Caco-2 (cell line): ENCODE measurements at regions of chr10 and their contacts with region 1.

Region 1: GRCh38 chr10:113073549-113074189 is 123.6 kb downstream of the TCF7L2 start:
- DNase-seq: peak; percentile 91 to 96
- H3K4me3 ChIP-seq: peak overlapping the region; percentile 16
- H3K4me3 Mint-ChIP-seq: peak overlapping the region; percentile 65
- H3K27ac Mint-ChIP-seq: peak overlapping the region; percentile 97
- H3K4me1 ChIP-seq: peaks cover 27% of the 10 kb centered on the region
- H3K4me1 Mint-ChIP-seq: peaks cover 13% of the 10 kb centered on the region
- H3K27me3 ChIP-seq: no peaks in the 10 kb centered on the region
- H3K27me3 Mint-ChIP-seq: no peaks in the 10 kb centered on the region
- CTCF ChIP-seq: no peak

Region 2: DNA sequence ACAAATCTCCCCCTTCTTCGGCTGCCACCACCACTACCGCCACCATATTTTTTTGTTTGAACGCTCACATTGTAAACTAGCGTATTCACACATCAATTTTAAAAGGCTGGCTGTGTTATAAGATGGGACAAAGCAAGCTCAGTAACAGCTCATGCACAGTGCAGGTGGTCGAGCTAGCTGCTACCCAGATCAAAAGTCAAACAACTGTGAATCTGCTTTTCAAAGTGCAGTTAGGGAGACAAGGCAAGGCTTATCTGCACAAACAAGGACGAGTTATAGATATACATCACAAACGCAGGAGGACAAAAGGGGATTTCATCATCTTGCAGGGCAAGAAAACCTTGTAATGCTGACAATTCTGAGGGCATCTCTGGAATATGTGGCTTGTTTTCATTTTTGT is 395.1 kb before region 1 on chr10:
- CTCF ChIA-PET with region 1: no interaction called
- POLR2A ChIA-PET with region 1: no interaction called
- intact Hi-C with region 1: no loop called
- DNase-seq: peak in 1 of 2 experiments; percentile 36
- H3K4me3 ChIP-seq: no peak overlapping the region
- H3K4me3 Mint-ChIP-seq: no peak overlapping the region
- H3K27ac Mint-ChIP-seq: no peak overlapping the region
- H3K4me1 ChIP-seq: peaks cover 23% of the 10 kb centered on the region
- H3K4me1 Mint-ChIP-seq: peaks cover 12% of the 10 kb centered on the region
- H3K27me3 ChIP-seq: no peaks in the 10 kb centered on the region
- H3K27me3 Mint-ChIP-seq: no peaks in the 10 kb centered on the region
- CTCF ChIP-seq: no peak

Region 3: GRCh38 chr10:113059001-113059780 is 14.5 kb before region 1 on chr10:
- CTCF ChIA-PET with region 1: interaction called, 4 read pairs
- POLR2A ChIA-PET with region 1: interaction called, 13 read pairs
- intact Hi-C with region 1: no loop called
- DNase-seq: no peak
- H3K4me3 ChIP-seq: no peak overlapping the region
- H3K4me3 Mint-ChIP-seq: no peak overlapping the region
- H3K27ac Mint-ChIP-seq: no peak overlapping the region
- H3K4me1 ChIP-seq: peaks cover 38% of the 10 kb centered on the region
- H3K4me1 Mint-ChIP-seq: peaks cover 25% of the 10 kb centered on the region
- H3K27me3 ChIP-seq: no peaks in the 10 kb centered on the region
- H3K27me3 Mint-ChIP-seq: no peaks in the 10 kb centered on the region
- CTCF ChIP-seq: no peak

Region 4: GRCh38 chr10:113087165-113088029 is 13.7 kb after region 1 on chr10:
- CTCF ChIA-PET with region 1: interaction called, 5 read pairs
- POLR2A ChIA-PET with region 1: interaction called, 4 read pairs
- intact Hi-C with region 1: loop called (anchors 1 kb)
- DNase-seq: peak; percentile 81 to 87
- H3K4me3 ChIP-seq: no peak overlapping the region
- H3K4me3 Mint-ChIP-seq: peak overlapping the region; percentile 28
- H3K27ac Mint-ChIP-seq: peak overlapping the region; percentile 81
- H3K4me1 ChIP-seq: peaks cover 31% of the 10 kb centered on the region
- H3K4me1 Mint-ChIP-seq: peaks cover 33% of the 10 kb centered on the region
- H3K27me3 ChIP-seq: no peaks in the 10 kb centered on the region
- H3K27me3 Mint-ChIP-seq: no peaks in the 10 kb centered on the region
- CTCF ChIP-seq: no peak

Region 5: DNA sequence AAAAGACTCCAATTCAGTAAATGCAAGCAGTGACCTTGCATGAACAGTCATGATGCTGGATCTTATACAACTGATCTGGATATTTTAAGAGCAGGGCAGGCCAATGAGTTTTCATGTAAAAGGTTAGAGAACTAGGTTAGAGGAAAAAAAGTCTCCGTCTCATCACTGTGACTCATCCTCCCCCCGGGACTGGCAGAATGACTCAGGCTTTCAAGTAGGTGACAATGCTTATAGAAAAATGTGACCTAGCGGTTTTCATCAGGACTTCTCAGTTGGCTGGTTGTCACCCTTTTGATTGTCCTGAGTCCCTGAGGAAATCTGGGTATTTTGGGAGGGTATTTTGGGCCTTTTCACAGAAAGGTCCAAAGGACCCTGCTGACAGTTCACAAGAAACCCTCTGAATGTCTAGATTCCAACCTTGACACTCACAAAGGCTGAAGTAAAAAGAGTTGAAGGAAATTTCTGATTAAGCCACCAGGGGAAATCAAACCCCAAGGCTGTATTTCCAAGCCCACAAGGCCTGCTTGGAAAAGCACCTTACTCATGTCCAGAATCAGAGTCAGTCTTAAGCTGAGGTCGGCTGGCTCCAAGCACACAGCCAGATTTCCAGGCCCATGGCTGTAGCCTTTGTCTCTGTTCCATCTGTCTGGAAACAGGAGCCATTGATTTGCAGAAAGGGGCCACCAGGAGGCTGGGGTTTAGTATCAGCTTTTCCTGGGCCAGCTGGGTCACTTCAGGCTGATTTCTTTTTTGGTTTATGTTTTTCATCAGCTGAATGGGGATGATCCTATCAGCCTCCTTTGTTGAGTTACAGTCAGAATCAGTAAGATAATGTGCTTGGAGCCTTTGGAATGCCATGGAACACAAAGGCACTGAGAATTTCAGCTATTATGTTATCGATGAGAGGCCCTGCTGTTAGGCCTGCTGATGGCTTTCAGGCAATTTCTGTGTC is 252.8 kb after region 1 on chr10:
- CTCF ChIA-PET with region 1: no interaction called
- POLR2A ChIA-PET with region 1: no interaction called
- intact Hi-C with region 1: no loop called
- DNase-seq: no peak
- H3K4me3 ChIP-seq: no peak overlapping the region
- H3K4me3 Mint-ChIP-seq: no peak overlapping the region
- H3K27ac Mint-ChIP-seq: no peak overlapping the region
- H3K4me1 ChIP-seq: peaks cover 7% of the 10 kb centered on the region; the same call in 1 of the 2 replicates
- H3K4me1 Mint-ChIP-seq: no peaks in the 10 kb centered on the region
- H3K27me3 ChIP-seq: no peaks in the 10 kb centered on the region
- H3K27me3 Mint-ChIP-seq: no peaks in the 10 kb centered on the region
- CTCF ChIP-seq: peak in 1 of 2 experiments; percentile 12